MCF 10A (cell line): ENCODE measurements at regions of chr21 and their contacts with region 1.

Region 1: DNA sequence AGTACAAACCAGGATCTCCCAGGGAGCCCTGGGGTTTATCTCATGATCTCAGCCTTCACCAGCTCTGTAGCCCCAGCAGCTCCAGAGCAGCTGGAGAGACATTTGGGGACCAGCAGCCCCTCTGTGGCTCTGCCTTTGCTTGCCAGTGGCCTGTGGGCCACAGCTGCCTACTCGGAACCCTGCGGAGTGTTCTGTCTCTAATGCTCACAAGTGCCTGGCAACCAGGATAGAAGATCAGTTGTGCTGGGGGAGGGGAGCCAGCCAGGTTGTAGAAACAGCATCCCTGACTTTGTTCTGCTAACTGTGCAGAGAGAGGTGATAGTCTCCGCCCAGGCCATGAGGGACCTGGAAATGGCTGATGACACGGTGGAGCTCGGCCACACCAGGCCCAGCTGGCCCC is 50.9 kb upstream of the KCNJ15 start:
- DNase-seq: no peak
- H3K4me3 Mint-ChIP-seq: no peak overlapping the region
- H3K27ac Mint-ChIP-seq: no peak overlapping the region
- H3K4me1 Mint-ChIP-seq: no peaks in the 10 kb centered on the region
- H3K27me3 Mint-ChIP-seq: peaks cover 15% of the 10 kb centered on the region
- CTCF ChIP-seq: no peak

Region 2: GRCh38 chr21:38075831-38076587 is 129.9 kb before region 1 on chr21:
- CTCF ChIA-PET with region 1: no interaction called
- POLR2A ChIA-PET with region 1: no interaction called
- intact Hi-C with region 1: no loop called
- DNase-seq: no peak
- H3K4me3 Mint-ChIP-seq: no peak overlapping the region
- H3K27ac Mint-ChIP-seq: no peak overlapping the region
- H3K4me1 Mint-ChIP-seq: no peaks in the 10 kb centered on the region
- H3K27me3 Mint-ChIP-seq: peaks cover 32% of the 10 kb centered on the region
- CTCF ChIP-seq: no peak

Region 3: GRCh38 chr21:38181096-38181495 is 24.8 kb before region 1 on chr21:
- CTCF ChIA-PET with region 1: interaction called, 3 read pairs
- POLR2A ChIA-PET with region 1: interaction called, 4 read pairs
- intact Hi-C with region 1: loop called (anchors 1 kb)
- DNase-seq: no peak
- H3K4me3 Mint-ChIP-seq: no peak overlapping the region
- H3K27ac Mint-ChIP-seq: no peak overlapping the region
- H3K4me1 Mint-ChIP-seq: peaks cover 13% of the 10 kb centered on the region
- H3K27me3 Mint-ChIP-seq: no peaks in the 10 kb centered on the region
- CTCF ChIP-seq: no peak

Region 4: DNA sequence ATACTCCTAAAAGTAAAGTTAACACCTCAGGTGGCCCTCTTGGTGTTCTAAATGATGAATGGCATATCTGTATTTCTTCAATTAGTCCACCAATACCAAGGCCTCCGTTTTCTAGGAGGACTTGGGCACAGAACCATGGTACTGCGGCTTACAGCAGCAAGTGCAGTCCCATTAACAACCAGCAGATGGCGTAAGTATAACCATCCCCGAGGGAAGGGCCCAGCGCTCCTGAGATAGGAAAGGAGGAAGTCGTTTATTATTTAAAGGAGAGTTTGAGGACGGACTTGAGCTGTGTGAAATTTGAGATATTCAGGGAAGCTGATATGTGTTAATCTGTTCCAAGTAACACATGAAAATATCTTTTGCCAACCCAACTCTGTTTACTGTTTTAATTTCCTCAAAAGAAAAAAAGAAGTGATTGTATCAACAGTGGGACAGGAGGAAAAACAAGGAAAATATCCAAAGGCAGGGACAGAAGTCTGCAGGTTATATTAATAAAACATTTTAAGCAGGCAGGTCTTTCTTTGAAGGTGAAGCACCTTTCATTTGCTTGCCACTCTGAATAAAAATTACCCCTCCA is 13.2 kb after region 1 on chr21:
- CTCF ChIA-PET with region 1: interaction called, 16 read pairs
- POLR2A ChIA-PET with region 1: no interaction called
- intact Hi-C with region 1: no loop called
- DNase-seq: peak; percentile 78
- H3K4me3 Mint-ChIP-seq: no peak overlapping the region
- H3K27ac Mint-ChIP-seq: no peak overlapping the region
- H3K4me1 Mint-ChIP-seq: peaks cover 7% of the 10 kb centered on the region
- H3K27me3 Mint-ChIP-seq: no peaks in the 10 kb centered on the region
- CTCF ChIP-seq: peak; percentile 94

Region 5: GRCh38 chr21:38289705-38290485 is 84.0 kb after region 1 on chr21:
- CTCF ChIA-PET with region 1: no interaction called
- POLR2A ChIA-PET with region 1: no interaction called
- intact Hi-C with region 1: no loop called
- DNase-seq: peak; percentile 98
- H3K4me3 Mint-ChIP-seq: peak overlapping the region; percentile 41
- H3K27ac Mint-ChIP-seq: peak overlapping the region; percentile 77
- H3K4me1 Mint-ChIP-seq: peaks cover 38% of the 10 kb centered on the region
- H3K27me3 Mint-ChIP-seq: no peaks in the 10 kb centered on the region
- CTCF ChIP-seq: no peak

Region 6: GRCh38 chr21:38878379-38879179 is 672.6 kb after region 1 on chr21:
- CTCF ChIA-PET with region 1: no interaction called
- POLR2A ChIA-PET with region 1: no interaction called
- intact Hi-C with region 1: no loop called
- DNase-seq: peak; percentile 74
- H3K4me3 Mint-ChIP-seq: no peak overlapping the region
- H3K27ac Mint-ChIP-seq: no peak overlapping the region
- H3K4me1 Mint-ChIP-seq: peaks cover 28% of the 10 kb centered on the region
- H3K27me3 Mint-ChIP-seq: no peaks in the 10 kb centered on the region
- CTCF ChIP-seq: no peak